ENCODE measurements at regions of chr2 and their contacts with region 1.

Region 1: GRCh38 chr2:68837164-68837860 is 33.9 kb downstream of the BMP10 start:
- DNase-seq: peak; percentile 54 to 86 (median 70)
- ATAC-seq: peak; percentile 85
- H3K4me3 ChIP-seq: no peak overlapping the region
- H3K4me3 Mint-ChIP-seq: no peak overlapping the region
- H3K27ac ChIP-seq: no peak overlapping the region
- H3K27ac Mint-ChIP-seq: peak overlapping the region; percentile 4
- H3K4me1 ChIP-seq: peaks cover 27% of the 10 kb centered on the region
- H3K4me1 Mint-ChIP-seq: peaks cover 38% of the 10 kb centered on the region
- H3K27me3 ChIP-seq: no peaks in the 10 kb centered on the region
- H3K27me3 Mint-ChIP-seq: no peaks in the 10 kb centered on the region
- CTCF ChIP-seq: peak; percentile 84

Region 2: GRCh38 chr2:68709421-68709911 is 127.8 kb before region 1 on chr2:
- CTCF ChIA-PET with region 1: interaction called, 4 read pairs
- POLR2A ChIA-PET with region 1: no interaction called
- intact Hi-C with region 1: loop called (anchors 2 to 5 kb)
- DNase-seq: peak in 4 of 14 experiments; percentile 36 to 62 (median 58)
- ATAC-seq: peak; percentile 77
- H3K4me3 ChIP-seq: no peak overlapping the region
- H3K4me3 Mint-ChIP-seq: no peak overlapping the region
- H3K27ac ChIP-seq: no peak overlapping the region
- H3K27ac Mint-ChIP-seq: no peak overlapping the region
- H3K4me1 ChIP-seq: peaks cover 6% of the 10 kb centered on the region
- H3K4me1 Mint-ChIP-seq: peaks cover 28% of the 10 kb centered on the region
- H3K27me3 ChIP-seq: no peaks in the 10 kb centered on the region
- H3K27me3 Mint-ChIP-seq: no peaks in the 10 kb centered on the region
- CTCF ChIP-seq: peak; percentile 92

Region 3: DNA sequence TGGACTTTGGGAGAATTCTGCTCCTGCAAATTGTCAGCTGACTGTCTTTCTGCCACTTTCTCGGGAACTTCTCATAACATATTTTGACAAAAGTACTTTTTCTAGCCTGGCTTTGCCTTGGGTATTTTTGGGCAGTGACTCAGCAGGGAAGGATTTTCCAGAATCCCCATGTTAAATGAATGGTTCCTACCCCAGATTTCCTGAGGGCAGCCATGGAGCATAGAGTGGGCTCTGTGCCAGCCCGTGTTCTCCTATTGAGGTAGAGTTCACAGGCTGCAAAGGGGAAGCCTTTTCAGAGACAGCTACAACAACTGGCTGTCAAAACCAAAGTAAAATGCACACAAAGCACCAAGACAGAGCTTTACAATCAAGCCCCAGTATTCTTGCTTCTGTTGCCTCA is 25.9 kb before region 1 on chr2:
- CTCF ChIA-PET with region 1: no interaction called
- POLR2A ChIA-PET with region 1: no interaction called
- intact Hi-C with region 1: loop called in 1 of 2 experiments (anchors 2 kb)
- DNase-seq: no peak
- ATAC-seq: no peak
- H3K4me3 ChIP-seq: no peak overlapping the region
- H3K4me3 Mint-ChIP-seq: no peak overlapping the region
- H3K27ac ChIP-seq: peak overlapping the region in 1 of 2 donors; percentile 39
- H3K27ac Mint-ChIP-seq: peak overlapping the region; percentile 76
- H3K4me1 ChIP-seq: peaks cover 30% of the 10 kb centered on the region
- H3K4me1 Mint-ChIP-seq: peaks cover 68% of the 10 kb centered on the region
- H3K27me3 ChIP-seq: no peaks in the 10 kb centered on the region
- H3K27me3 Mint-ChIP-seq: no peaks in the 10 kb centered on the region
- CTCF ChIP-seq: no peak

Measured in CD4-positive, alpha-beta T cell (primary cell).